Activated CD4-positive, alpha-beta T cell treated with anti-CD3 and anti-CD28 coated beads for 36 hours (primary cell): ENCODE measurements at regions of chr3 and their contacts with region 1.

Region 1: GRCh38 chr3:183884427-183885296 is at the start of gene PARL:
- DNase-seq: peak; percentile 98
- ATAC-seq: peak; percentile 100
- H3K4me3 Mint-ChIP-seq: peak within 1 kb of the TSS; percentile 94
- H3K27ac Mint-ChIP-seq: peak within 1 kb of the TSS; percentile 94
- H3K4me1 Mint-ChIP-seq: peaks cover 32% of the 10 kb centered on the region
- H3K27me3 Mint-ChIP-seq: no peaks in the 10 kb centered on the region
- total RNA-seq, gene PARL: 55.9 to 91.9 TPM

Region 2: DNA sequence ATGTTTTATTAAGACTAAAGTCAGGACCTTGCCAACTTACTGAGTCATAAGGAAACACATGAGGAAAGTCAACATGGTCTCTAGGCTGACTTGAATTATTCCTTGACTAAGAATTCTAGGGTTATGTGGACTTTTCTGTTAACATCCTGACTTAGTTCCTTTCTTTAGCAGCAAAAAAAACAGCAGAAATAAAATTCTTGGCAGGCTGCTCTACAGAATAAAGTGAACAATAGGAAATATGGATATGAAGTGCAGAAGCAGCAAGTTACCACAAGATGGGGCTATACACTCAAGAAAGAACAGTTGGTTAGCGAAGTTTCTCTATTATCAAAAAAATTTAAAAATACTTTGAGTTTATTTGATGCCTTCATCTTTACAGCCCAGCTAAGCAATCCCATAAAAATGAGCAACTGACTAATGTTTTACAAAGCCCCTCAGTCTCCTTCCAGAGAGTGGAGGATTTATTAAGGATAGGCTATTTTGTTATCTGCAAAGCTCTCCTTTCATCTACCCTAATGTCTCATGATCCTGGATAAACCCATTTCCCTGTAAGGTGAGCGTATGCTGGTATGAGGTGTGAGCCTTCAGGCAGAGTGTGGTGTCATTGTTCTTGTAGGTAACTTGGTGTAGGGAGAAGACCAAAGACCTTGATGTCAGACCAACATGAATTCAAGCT is 762.3 kb before region 1 on chr3:
- CTCF ChIA-PET with region 1: interaction called, 4 read pairs
- POLR2A ChIA-PET with region 1: no interaction called
- intact Hi-C with region 1: loop called in 1 of 2 experiments (anchors 2 kb)
- DNase-seq: no peak
- ATAC-seq: peak; percentile 74
- H3K4me3 Mint-ChIP-seq: no peak overlapping the region
- H3K27ac Mint-ChIP-seq: no peak overlapping the region
- H3K4me1 Mint-ChIP-seq: peaks cover 10% of the 10 kb centered on the region
- H3K27me3 Mint-ChIP-seq: peaks cover 4% of the 10 kb centered on the region

Region 3: DNA sequence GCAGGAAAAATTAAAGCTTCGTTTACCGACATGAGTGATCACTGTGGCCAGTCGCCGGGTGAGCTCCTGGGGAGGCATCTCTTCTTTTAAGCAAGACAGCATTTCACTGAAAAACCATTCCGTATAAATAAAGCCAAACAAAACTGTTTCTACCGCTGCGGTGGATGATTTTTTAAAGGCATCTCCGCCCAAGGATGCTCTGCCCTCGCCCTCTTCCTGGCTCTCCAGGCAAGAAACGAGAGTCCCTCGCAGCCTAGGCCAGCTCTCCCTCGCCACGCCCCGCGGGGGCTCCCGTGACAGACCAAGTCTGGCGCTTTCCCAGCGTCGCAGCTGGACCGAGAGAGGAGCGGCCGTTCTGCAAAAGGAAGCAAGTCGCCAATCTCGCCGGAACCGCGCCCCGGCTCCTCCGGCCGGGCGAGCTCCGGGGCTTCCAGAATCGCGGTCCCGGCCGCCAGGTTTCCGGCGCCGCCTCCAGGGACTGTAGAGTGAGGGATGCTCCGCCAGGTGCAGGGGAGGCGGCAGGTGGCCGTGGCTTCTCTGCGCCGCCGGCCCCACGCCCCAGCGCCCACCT is 456.7 kb before region 1 on chr3:
- CTCF ChIA-PET with region 1: interaction called, 3 read pairs
- POLR2A ChIA-PET with region 1: no interaction called
- intact Hi-C with region 1: loop called in 1 of 2 experiments (anchors 1 kb)
- DNase-seq: peak; percentile 57
- ATAC-seq: peak; percentile 21
- H3K4me3 Mint-ChIP-seq: peak overlapping the region; percentile 79
- H3K27ac Mint-ChIP-seq: no peak overlapping the region
- H3K4me1 Mint-ChIP-seq: peaks cover 43% of the 10 kb centered on the region
- H3K27me3 Mint-ChIP-seq: peaks cover 11% of the 10 kb centered on the region

Region 4: DNA sequence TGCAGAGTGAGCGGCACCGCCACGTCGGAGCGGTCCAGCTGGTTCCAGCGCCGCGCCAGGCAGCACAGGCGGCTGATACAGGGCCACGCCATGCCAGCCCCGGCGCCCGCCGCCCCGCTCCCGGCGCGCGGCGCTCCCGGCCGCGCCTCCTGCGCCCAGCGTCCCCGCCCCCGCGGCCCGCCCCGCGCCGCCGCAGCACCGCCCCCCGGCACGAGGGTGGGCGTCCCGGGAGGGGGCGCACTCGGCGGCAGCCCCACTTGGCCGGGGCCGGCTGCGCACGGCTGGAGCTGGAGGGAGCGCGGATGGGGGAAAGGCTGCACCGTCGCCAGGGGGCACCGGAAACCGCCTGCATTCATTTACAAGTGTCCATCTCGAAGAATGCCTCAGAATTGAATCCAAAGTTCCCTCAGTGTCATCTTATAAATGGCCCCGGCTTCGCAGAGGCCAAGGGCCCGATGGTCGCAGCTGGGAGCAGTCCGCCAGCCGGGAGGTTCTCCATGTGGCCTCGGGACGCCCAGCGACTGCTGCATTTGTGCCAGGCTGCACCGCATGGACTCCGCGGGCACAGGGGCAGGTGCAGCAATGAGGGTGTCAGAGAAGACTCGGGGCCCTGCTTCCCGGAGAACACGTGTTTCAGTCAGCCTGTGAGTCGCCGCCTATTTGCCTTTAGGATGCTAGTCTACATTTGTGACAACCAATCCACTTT is 59.1 kb before region 1 on chr3 and contains the start of gene MAP6D1:
- CTCF ChIA-PET with region 1: interaction called, 6 read pairs
- POLR2A ChIA-PET with region 1: no interaction called
- intact Hi-C with region 1: loop called (anchors 1 to 2 kb)
- DNase-seq: peak; percentile 68
- ATAC-seq: peak; percentile 59
- H3K4me3 Mint-ChIP-seq: peak within 1 kb of the TSS; percentile 74
- H3K27ac Mint-ChIP-seq: peak within 1 kb of the TSS; percentile 55
- H3K4me1 Mint-ChIP-seq: peaks cover 11% of the 10 kb centered on the region
- H3K27me3 Mint-ChIP-seq: peaks cover 2% of the 10 kb centered on the region
- total RNA-seq, gene MAP6D1: 1.3 to 1.6 TPM

Region 5: DNA sequence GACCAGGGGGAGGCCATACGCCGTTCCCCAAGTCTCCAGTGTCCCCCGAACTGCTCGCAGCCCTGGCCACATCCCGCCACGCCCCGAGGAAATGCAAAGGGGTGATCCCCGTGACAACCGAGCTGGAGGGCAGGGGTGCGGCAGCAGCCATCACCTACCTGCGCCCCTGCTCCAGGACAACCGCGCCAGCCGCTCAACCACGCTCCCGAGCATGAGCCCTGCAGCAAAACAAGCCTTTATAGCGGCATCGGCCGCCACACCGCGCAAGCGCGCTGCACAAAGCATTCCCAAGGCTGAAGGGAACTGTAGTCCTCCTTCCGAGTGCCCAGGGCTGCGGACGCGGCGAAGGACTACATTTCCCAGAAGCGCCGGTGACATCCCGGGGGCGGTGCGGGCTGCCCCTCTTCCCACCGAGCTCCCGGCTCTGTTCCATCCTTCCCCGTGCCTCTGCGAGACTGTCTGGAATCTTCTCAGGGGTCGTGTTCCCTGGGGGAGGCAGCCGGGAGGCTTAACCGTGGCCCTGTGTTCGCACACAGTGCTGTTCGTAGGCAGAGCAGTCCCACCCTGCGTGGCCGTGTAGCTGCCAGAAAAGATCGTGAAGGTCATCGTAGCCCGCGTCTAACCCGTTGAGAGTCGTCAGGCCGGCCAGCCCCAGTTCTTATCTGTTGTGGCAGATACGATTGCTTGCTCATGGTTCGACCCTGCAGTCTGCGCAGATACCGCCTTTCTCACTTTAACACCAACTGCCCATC is 133.2 kb after region 1 on chr3 and contains the start of gene ABCC5:
- CTCF ChIA-PET with region 1: interaction called, 5 read pairs
- POLR2A ChIA-PET with region 1: no interaction called
- intact Hi-C with region 1: loop called in 1 of 2 experiments (anchors 1 kb)
- DNase-seq: peak; percentile 91
- ATAC-seq: peak; percentile 96
- H3K4me3 Mint-ChIP-seq: peak within 1 kb of the TSS; percentile 98
- H3K27ac Mint-ChIP-seq: peak within 1 kb of the TSS; percentile 85
- H3K4me1 Mint-ChIP-seq: peaks cover 17% of the 10 kb centered on the region
- H3K27me3 Mint-ChIP-seq: peaks cover 9% of the 10 kb centered on the region
- total RNA-seq, gene ABCC5: 12.5 to 15.8 TPM

Region 6: DNA sequence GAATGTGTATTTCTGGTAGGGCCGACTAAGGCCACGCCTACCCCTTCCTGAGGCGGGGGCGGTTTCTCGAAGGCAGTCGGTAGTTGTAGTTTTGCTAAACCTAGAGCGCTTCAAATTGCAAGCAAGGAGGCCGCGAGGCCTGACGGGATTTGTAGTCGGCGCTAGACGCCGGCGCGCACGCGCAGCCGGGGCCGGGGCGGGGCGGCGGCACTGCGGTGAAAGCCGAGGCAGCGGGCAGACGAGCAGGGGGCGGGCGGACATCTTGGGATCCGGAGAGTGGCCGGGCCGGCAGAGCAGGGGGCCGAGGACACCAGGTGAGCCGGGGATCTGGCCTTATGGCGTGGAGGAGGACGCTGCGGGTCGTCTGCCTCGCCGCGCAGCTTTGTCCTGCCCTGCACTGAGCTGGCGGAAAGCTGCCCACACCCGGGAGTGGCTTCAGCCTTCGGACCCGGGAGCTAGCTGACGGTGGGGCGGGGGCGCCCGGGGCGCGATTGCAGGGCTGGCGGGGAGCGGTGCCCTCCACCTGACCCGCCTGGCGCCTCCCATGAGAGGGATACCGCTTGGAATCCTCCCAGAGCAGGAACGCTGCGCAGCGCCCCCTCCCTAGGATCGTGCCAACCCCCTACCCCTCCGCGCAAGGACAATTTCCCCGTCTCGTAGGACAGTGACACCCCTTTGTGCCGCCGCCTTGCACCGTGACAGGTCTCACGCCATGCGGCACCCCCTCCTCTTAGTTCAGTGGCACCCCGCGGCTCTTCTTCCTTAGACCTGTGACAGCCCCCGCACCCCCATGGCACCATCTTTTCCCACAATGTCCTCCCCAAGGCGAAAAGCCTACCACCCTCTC is 290.2 kb after region 1 on chr3 and contains the start of gene AP2M1:
- CTCF ChIA-PET with region 1: no interaction called
- POLR2A ChIA-PET with region 1: no interaction called
- intact Hi-C with region 1: loop called in 1 of 2 experiments (anchors 1 kb)
- DNase-seq: peak; percentile 98
- ATAC-seq: peak; percentile 97
- H3K4me3 Mint-ChIP-seq: peak within 1 kb of the TSS; percentile 95
- H3K27ac Mint-ChIP-seq: peak within 1 kb of the TSS; percentile 89
- H3K4me1 Mint-ChIP-seq: peaks cover 23% of the 10 kb centered on the region
- H3K27me3 Mint-ChIP-seq: no peaks in the 10 kb centered on the region
- total RNA-seq, gene AP2M1: 192 to 204 TPM